ENCODE measurements at regions of chr12 and their contacts with region 1.

Region 1: DNA sequence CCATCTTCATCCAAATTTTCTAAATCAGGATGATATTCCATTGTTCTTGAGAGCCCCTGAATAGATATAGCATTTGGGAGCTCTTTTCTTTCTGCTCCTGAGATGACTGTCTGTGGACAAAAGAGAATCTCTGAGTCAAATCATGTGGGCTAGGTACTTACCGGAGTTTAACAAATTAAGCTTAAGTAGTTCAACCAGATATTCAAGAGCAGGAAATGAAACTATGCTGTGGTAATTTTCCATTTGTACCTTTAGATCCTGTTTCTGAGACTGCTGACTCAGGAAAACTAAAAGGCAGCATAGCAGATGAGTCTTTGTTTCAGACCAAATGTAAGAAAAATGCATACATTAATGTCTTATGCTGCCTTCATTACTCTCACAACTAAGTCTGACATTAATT is at the start of gene CLEC7A:
- DNase-seq: no peak
- ATAC-seq: peak in 3 of 4 donors; percentile 33 to 51 (median 43)
- H3K4me3 ChIP-seq: peak within 1 kb of the TSS; percentile 1 to 20 (median 1)
- H3K27ac ChIP-seq: peak within 1 kb of the TSS; percentile 10 to 45 (median 41)
- H3K4me1 ChIP-seq: no peaks in the 10 kb centered on the region
- H3K27me3 ChIP-seq: no peaks in the 10 kb centered on the region
- CTCF ChIP-seq: no peak
- POLR2A ChIP-seq: peak; percentile 51
- total RNA-seq, gene CLEC7A: 1.6 to 9.5 (median 3.8) TPM

Region 2: GRCh38 chr12:10033783-10034545 is 96.1 kb before region 1 on chr12:
- intact Hi-C with region 1: loop called in 1 of 2 experiments (anchors 10 kb)
- DNase-seq: no peak
- ATAC-seq: peak; percentile 42 to 75 (median 60)
- H3K4me3 ChIP-seq: no peak overlapping the region
- H3K27ac ChIP-seq: no peak overlapping the region
- H3K4me1 ChIP-seq: no peaks in the 10 kb centered on the region
- H3K27me3 ChIP-seq: no peaks in the 10 kb centered on the region
- CTCF ChIP-seq: peak; percentile 57 to 64 (median 59)
- POLR2A ChIP-seq: no peak

Region 3: GRCh38 chr12:10052193-10052913 is 77.7 kb before region 1 on chr12:
- intact Hi-C with region 1: no loop called
- DNase-seq: no peak
- ATAC-seq: no peak
- H3K4me3 ChIP-seq: no peak overlapping the region
- H3K27ac ChIP-seq: no peak overlapping the region
- H3K4me1 ChIP-seq: no peaks in the 10 kb centered on the region
- H3K27me3 ChIP-seq: no peaks in the 10 kb centered on the region
- CTCF ChIP-seq: no peak
- POLR2A ChIP-seq: no peak

Region 4: GRCh38 chr12:10069099-10069498 is 60.9 kb before region 1 on chr12:
- intact Hi-C with region 1: no loop called
- DNase-seq: no peak
- ATAC-seq: peak; percentile 33 to 58 (median 46)
- H3K4me3 ChIP-seq: no peak overlapping the region
- H3K27ac ChIP-seq: peak overlapping the region; percentile 13 to 76 (median 52)
- H3K4me1 ChIP-seq: no peaks in the 10 kb centered on the region
- H3K27me3 ChIP-seq: no peaks in the 10 kb centered on the region
- CTCF ChIP-seq: no peak
- POLR2A ChIP-seq: no peak